ENCODE measurements at regions of chr4 and their contacts with region 1.

Region 1: GRCh38 chr4:74675673-74676279 is 118.5 kb downstream of the BTC start:
- DNase-seq: peak; percentile 80
- ATAC-seq: peak; percentile 90
- H3K4me3 ChIP-seq: no peak overlapping the region
- H3K27ac ChIP-seq: no peak overlapping the region
- H3K4me1 ChIP-seq: peaks cover 7 to 33% of the 10 kb centered on the region in 2 experiments; a peak in 3 of 4 replicates
- H3K27me3 ChIP-seq: no peaks in the 10 kb centered on the region
- CTCF ChIP-seq: peak; percentile 78 to 90 (median 80)
- POLR2A ChIP-seq: no peak
- RAD21 ChIP-seq: peak; percentile 97

Region 2: DNA sequence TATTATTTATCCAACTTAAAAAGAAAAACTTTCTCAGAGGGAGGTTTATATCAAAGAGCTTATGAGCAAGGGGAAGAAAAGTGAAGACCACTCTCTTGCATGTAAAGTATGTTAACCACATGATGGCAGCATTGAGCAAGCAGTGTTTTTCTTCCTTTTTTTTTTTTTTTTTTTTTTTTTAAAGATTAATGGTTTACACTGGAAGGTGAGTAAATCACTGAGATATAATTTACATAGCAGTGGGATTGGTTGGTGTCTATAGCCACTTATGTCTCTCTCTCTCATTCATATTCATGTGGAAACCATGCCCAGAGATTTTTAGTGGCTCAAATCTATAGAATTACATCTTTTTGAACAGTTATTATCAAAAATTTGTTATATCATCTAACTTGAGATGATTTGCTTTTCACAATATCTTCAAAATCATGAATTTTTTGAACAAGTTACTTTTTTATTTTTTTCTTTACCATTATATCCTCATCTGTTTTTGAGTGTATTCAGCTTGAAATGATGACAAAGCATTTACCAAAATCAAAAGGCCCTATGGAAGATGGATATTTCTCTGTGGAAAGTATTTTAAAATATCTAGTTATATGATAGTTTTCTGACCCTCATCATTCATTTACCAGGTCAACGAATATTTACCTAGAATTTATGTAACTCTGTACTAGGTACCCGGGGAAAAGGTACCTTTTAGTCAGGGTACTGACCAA is 486.3 kb before region 1 on chr4:
- CTCF ChIA-PET with region 1: interaction called, 6 read pairs
- POLR2A ChIA-PET with region 1: no interaction called
- RAD21 ChIA-PET with region 1: no interaction called
- intact Hi-C with region 1: loop called (anchors 2 kb)
- DNase-seq: peak; percentile 72
- ATAC-seq: peak; percentile 73
- H3K4me3 ChIP-seq: no peak overlapping the region
- H3K27ac ChIP-seq: no peak overlapping the region
- H3K4me1 ChIP-seq: peaks cover 0 to 7% of the 10 kb centered on the region in 2 experiments; a peak in 1 of 4 replicates
- H3K27me3 ChIP-seq: no peaks in the 10 kb centered on the region
- CTCF ChIP-seq: peak; percentile 64 to 81 (median 76)
- POLR2A ChIP-seq: no peak
- RAD21 ChIP-seq: peak; percentile 87

Region 3: GRCh38 chr4:74320559-74321118 is 355.1 kb before region 1 on chr4:
- CTCF ChIA-PET with region 1: interaction called, 42 read pairs
- POLR2A ChIA-PET with region 1: interaction called, 14 read pairs
- RAD21 ChIA-PET with region 1: interaction called, 3 read pairs
- intact Hi-C with region 1: loop called (anchors 1 kb)
- DNase-seq: peak; percentile 98
- ATAC-seq: peak; percentile 95
- H3K4me3 ChIP-seq: peak overlapping the region; percentile 10 to 41; a peak in 3 of 4 replicates
- H3K27ac ChIP-seq: peak overlapping the region; percentile 58
- H3K4me1 ChIP-seq: peaks cover 29 to 61% of the 10 kb centered on the region in 2 experiments
- H3K27me3 ChIP-seq: no peaks in the 10 kb centered on the region
- CTCF ChIP-seq: peak; percentile 59 to 86 (median 71)
- POLR2A ChIP-seq: no peak
- RAD21 ChIP-seq: peak; percentile 96

Region 4: DNA sequence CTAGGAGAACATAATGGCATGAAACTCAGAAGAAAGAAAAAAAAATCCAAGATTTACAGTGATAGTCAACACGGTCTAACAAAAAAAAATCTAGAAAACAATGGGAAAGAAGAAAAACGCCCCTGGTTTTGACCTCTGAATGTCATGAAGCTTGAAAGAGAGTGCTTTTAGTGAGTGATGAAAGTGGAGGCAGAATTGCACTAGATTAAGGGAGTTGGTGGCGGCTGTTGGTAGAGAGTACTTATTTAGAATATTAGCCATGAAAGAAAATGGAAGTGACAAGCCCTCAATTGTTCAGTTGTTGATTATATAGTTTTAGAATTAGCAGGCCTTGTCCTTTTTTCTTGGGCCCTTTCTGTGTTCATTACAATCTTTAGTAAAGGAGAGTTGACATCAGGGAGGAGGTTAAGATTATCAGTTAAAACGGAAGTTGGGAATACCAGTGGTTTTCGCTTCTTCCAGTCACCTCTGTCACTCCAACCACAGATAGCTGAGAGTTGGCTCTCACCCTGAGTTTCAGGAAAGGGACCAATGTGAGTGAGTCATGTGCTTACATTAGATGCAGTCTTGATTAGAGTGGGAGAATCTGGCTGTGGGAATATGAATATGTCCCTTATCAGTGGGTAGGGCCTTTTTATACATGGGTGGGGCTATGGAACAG is 281.2 kb before region 1 on chr4:
- CTCF ChIA-PET with region 1: no interaction called
- POLR2A ChIA-PET with region 1: no interaction called
- RAD21 ChIA-PET with region 1: no interaction called
- intact Hi-C with region 1: loop called (anchors 5 kb)
- DNase-seq: peak; percentile 82
- ATAC-seq: peak; percentile 72
- H3K4me3 ChIP-seq: peak overlapping the region in 1 of 2 experiments; percentile 8; a peak in 2 of 4 replicates
- H3K27ac ChIP-seq: peak overlapping the region; percentile 86
- H3K4me1 ChIP-seq: peaks cover 30 to 66% of the 10 kb centered on the region in 2 experiments
- H3K27me3 ChIP-seq: no peaks in the 10 kb centered on the region
- CTCF ChIP-seq: no peak
- POLR2A ChIP-seq: no peak
- RAD21 ChIP-seq: peak; percentile 33; the same call in 1 of the 2 replicates

Region 5: DNA sequence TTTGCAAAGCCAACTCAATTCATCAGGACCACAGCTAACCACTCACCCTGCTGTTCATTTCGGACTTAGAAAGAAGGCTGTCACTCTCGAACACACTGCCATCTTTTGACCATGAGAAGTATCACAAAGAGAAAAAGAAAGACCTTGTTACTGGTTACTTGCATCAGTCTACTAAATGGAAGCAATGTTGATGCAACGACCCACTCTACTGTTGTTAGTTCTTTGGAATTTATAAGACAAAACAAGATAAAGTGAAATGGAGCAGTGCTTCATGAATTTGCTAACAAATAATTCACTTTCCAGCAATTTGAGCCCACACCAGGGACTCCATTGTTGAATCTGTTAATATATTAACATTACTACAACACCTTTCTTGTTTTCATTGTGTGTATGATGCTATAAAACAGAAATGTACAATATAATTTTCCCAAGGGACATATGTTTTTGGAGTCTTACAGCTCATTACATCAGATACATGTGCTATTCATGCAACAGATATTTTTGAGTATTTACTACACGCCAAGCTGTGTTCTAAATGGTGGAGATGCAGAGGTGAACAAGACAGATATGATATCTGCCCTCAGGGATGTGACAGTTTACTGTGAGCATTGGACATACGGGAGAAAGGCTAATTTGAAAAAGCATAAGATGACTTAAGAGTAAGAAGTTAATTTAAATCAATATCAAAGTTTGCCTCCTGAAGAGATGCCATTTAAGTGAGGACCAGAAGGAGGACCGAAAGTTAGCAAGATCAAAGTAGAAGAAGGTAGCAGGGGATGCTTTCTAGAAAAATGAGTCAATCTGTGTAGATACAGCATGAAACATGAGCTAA is 143.6 kb before region 1 on chr4:
- CTCF ChIA-PET with region 1: interaction called, 14 read pairs
- POLR2A ChIA-PET with region 1: interaction called, 3 read pairs
- RAD21 ChIA-PET with region 1: no interaction called
- intact Hi-C with region 1: loop called (anchors 1 kb)
- DNase-seq: peak; percentile 92
- ATAC-seq: peak; percentile 86
- H3K4me3 ChIP-seq: no peak overlapping the region
- H3K27ac ChIP-seq: peak overlapping the region; percentile 37; the same call in 1 of the 2 replicates
- H3K4me1 ChIP-seq: peaks cover 54 to 79% of the 10 kb centered on the region in 2 experiments
- H3K27me3 ChIP-seq: no peaks in the 10 kb centered on the region
- CTCF ChIP-seq: peak; percentile 59 to 98 (median 69)
- POLR2A ChIP-seq: no peak
- RAD21 ChIP-seq: peak; percentile 95

Region 6: DNA sequence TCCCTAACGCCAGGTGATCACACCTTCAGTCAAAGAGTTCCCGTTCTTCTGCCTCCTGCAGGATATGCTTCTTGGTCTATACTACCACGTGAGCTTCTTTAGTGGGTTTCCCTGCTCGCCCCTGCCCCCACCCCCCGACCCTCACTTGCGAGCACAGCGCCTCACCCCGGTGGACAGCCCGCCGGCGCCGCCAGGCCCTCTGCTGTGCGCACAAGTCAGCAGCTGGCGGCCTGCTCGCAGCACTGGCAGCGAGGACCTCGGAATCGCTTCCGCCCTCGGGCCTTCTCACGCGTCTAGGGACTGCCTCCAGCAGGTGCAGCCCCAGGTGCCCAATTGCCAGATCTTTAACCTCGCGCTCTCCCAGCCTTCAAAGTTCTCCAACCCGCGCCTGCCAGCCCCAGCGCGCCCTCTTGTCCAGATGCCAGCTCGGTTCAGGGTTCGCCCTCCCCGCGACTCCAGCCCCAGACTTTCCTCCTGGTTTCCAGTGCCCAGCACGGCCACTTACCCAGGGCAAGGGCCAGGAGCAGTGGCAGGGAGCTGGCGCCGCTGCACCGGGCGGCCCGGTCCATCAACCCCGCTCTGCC is 118.1 kb after region 1 on chr4:
- CTCF ChIA-PET with region 1: interaction called, 17 read pairs
- POLR2A ChIA-PET with region 1: interaction called, 13 read pairs
- RAD21 ChIA-PET with region 1: no interaction called
- intact Hi-C with region 1: loop called (anchors 2 kb)
- DNase-seq: no peak
- ATAC-seq: peak; percentile 83
- H3K4me3 ChIP-seq: peak overlapping the region; percentile 61 to 69
- H3K27ac ChIP-seq: peak overlapping the region; percentile 84
- H3K4me1 ChIP-seq: peaks cover 9 to 19% of the 10 kb centered on the region in 2 experiments
- H3K27me3 ChIP-seq: no peaks in the 10 kb centered on the region
- CTCF ChIP-seq: peak; percentile 76 to 82 (median 77)
- POLR2A ChIP-seq: peak; percentile 27
- RAD21 ChIP-seq: peak; percentile 36; the same call in 1 of the 2 replicates